ENCODE measurements at regions of chr15 and their contacts with region 1.

Region 1: DNA sequence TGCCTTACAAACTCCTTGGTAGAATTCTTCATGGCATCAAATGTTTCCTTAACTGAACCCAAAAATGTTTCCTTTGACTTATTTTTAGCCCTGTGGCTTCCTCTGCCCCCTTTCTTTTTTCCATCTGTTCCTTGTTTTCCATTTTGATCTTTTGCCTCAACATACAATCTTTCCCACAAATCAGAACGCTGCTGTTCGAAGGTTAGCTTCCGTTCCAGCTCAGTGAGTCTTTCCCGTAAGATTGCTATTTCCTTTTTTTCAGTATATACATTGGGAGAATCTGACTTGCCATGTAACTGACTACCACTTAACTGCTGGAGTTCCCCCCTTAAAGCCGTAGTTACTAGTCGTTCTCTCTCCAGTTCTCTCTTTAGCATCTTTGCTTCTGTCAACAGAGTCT is 41.2 kb downstream of the PIGB start:
- DNase-seq: no peak
- H3K4me3 ChIP-seq: no peak overlapping the region
- H3K27ac ChIP-seq: no peak overlapping the region
- H3K27me3 ChIP-seq: no peaks in the 10 kb centered on the region
- CTCF ChIP-seq: no peak

Region 2: GRCh38 chr15:55407949-55408791 is 47.9 kb after region 1 on chr15 and contains the starts of genes CCPG1 and PIERCE2:
- CTCF ChIA-PET with region 1: interaction called, 10 read pairs
- POLR2A ChIA-PET with region 1: interaction called, 3 read pairs
- DNase-seq: peak; percentile 85
- H3K4me3 ChIP-seq: peak within 1 kb of the TSS; percentile 86
- H3K27ac ChIP-seq: peak within 1 kb of the TSS; percentile 75
- H3K27me3 ChIP-seq: no peaks in the 10 kb centered on the region
- CTCF ChIP-seq: peak; percentile 74
- polyA plus RNA-seq, gene CCPG1: 32.0 and 43.7 TPM in 2 replicates
- polyA plus RNA-seq, gene PIERCE2: 2.1 and 3.0 TPM in 2 replicates

Measured in AG04450 (cell line).